ENCODE measurements at regions of chr2 and their contacts with region 1.

Region 1: DNA sequence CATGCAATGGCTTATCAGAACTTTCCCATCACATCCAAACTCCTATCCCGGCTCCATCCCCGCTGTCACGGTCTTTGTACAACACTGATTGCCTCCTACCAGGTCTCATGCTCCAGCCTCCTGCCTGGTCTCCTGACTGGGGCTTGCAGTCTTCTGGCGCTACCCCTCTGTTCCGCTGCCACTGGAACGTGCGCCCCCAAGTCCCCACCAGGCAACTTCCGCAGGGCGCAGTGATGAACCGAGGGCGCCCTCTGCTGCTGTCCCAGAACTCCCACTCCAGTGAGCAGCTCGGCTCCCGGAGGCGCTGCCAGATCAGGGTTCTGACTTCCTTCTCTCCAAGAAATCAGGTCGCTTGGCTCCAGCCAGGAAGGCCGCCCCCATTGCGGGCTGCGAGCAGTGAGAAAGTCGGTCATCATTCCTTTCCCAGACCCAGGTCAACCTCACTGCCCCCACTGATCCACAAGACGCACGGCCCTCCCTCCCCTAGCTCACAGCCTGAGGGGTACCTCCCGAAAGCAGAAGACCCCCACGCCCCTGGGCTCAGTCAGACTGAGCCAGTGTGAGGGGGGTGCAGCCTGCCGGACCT is 43.9 kb upstream of the RAB11FIP5 start:
- DNase-seq: peak; percentile 44
- ATAC-seq: peak; percentile 84
- H3K4me3 ChIP-seq: no peak overlapping the region
- H3K27ac ChIP-seq: no peak overlapping the region
- H3K4me1 ChIP-seq: 0 out of 2 replicates have a peak, but pooled peaks cover 2% of the 10 kb centered on the region
- H3K27me3 ChIP-seq: peaks cover 4% of the 10 kb centered on the region; the same call in 1 of the 2 replicates
- CTCF ChIP-seq: peak; percentile 86

Region 2: GRCh38 chr2:73112913-73113633 is 43.6 kb before region 1 on chr2 and contains the start of gene RAB11FIP5:
- CTCF ChIA-PET with region 1: interaction called, 3 read pairs
- POLR2A ChIA-PET with region 1: no interaction called
- intact Hi-C with region 1: loop called (anchors 2 kb)
- DNase-seq: peak; percentile 84
- ATAC-seq: peak; percentile 66
- H3K4me3 ChIP-seq: peak within 1 kb of the TSS; percentile 87
- H3K27ac ChIP-seq: peak within 1 kb of the TSS; percentile 82
- H3K4me1 ChIP-seq: peaks cover 18% of the 10 kb centered on the region
- H3K27me3 ChIP-seq: no peaks in the 10 kb centered on the region
- CTCF ChIP-seq: no peak
- total RNA-seq, gene RAB11FIP5: 26.6 and 36.9 TPM in 2 replicates

Measured in PC-3 (cell line).